Activated CD4-positive, alpha-beta T cell treated with anti-CD3 and anti-CD28 coated beads, Interleukin-2, amount 10 ng/mL, durations not matched to agents 24 days and 14 days (primary cell): ENCODE measurements at regions of chr2 and their contacts with region 1.

Region 1: GRCh38 chr2:85561317-85561979 is at the start of gene GGCX:
- DNase-seq: peak; percentile 97
- H3K4me3 Mint-ChIP-seq: peak within 1 kb of the TSS; percentile 97
- H3K27ac Mint-ChIP-seq: peak within 1 kb of the TSS; percentile 96
- H3K4me1 Mint-ChIP-seq: peaks cover 30% of the 10 kb centered on the region
- H3K27me3 Mint-ChIP-seq: no peaks in the 10 kb centered on the region
- total RNA-seq, gene GGCX: 21.8 and 23.1 TPM in 2 replicates

Region 2: DNA sequence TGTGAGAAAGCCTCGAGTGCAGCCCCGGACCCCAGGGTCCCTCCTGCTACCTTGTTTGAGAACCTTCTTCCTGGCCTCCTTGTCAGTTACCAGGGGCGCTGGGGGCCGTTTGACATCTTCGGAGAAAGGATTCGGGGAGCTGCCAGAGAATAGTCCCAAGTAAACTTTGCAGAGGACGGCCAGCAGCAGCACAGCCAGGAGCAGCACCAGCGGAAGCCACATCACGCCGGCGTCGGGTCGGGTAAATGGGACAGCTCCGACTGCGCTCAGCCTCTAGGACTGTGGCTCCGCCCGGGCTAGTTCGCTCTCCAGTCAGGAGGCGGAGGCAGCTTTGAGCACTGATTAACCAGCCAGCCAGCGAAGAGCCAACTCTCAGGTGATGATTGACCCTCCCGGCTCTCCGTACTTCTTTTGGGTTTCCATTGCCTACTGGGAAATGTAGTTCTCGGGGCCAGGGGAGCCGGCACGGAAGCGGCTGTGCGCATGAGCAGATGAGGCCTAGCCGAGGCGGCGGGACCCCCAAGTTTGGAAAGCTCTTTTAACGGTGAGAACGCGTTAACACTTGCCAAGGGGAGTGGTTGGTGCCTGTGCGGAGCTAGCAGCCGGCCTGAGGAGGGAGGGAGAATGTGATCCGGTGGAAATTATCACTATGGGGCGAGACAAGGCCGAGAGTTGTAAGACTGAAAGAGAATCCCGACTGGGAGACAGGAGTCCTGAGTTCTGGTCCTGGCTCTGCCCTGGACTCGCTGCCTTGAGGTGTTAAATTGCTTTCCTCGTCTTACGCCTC is 207.0 kb before region 1 on chr2 and contains the starts of genes ELMOD3 and RETSAT:
- intact Hi-C with region 1: loop called (anchors 1 kb)
- DNase-seq: peak; percentile 99
- H3K4me3 Mint-ChIP-seq: peak within 1 kb of the TSS; percentile 94
- H3K27ac Mint-ChIP-seq: peak within 1 kb of the TSS; percentile 94
- H3K4me1 Mint-ChIP-seq: peaks cover 26% of the 10 kb centered on the region
- H3K27me3 Mint-ChIP-seq: no peaks in the 10 kb centered on the region
- total RNA-seq, gene ELMOD3: 16.7 and 18.2 TPM in 2 replicates
- total RNA-seq, gene RETSAT: 21.0 and 25.0 TPM in 2 replicates

Region 3: DNA sequence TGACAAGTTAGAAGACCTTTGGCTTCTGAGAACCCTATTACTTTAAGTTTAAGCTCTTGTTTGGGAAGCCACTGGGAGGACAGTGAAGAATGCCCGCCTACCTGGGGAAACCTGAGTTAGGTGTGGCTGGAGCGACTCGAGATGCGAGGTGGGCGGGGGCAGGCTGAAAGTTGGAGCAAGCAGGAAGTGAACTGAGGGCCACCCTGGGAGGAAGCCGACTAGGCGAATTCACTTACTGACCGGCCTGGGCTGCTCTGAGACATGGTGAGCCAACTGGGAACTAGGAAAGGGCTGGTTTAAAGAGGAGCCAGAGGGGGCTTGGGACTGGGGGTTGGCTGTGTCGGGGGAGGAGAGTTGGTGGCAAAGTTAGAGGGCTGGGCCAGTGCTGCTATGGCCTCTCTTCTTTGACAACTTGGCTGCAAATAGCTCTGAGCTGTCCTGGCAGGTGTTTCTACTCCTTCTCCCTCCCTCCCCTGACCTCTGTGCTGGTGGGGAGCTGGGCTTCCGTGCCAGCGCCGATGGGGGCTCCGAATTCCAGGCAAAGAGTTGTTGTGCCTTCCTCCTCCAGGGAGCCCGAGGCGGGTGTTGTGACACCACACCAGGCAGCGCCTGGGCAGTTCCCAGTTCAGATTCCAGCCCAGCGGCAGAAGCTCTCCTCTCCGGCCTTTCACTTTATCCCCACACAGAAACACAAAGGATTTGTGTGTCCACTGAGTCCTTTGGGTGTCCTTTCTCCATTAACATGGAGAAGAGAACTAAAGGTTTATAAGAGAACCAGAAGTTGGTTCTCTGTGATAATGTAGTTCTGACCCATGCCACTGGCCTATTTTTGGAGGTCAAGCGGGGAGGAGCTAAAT is 16.2 kb after region 1 on chr2 and contains the start of gene VAMP8:
- intact Hi-C with region 1: loop called (anchors 1 kb)
- DNase-seq: peak; percentile 88
- H3K4me3 Mint-ChIP-seq: peak within 1 kb of the TSS; percentile 95
- H3K27ac Mint-ChIP-seq: peak within 1 kb of the TSS; percentile 81
- H3K4me1 Mint-ChIP-seq: peaks cover 30% of the 10 kb centered on the region
- H3K27me3 Mint-ChIP-seq: peaks cover 2% of the 10 kb centered on the region
- total RNA-seq, gene VAMP8: 90.9 and 91.3 TPM in 2 replicates

Region 4: GRCh38 chr2:85595301-85596025 is 34.0 kb after region 1 on chr2 and contains the start of gene RNF181:
- intact Hi-C with region 1: loop called (anchors 1 kb)
- DNase-seq: peak; percentile 98
- H3K4me3 Mint-ChIP-seq: peak within 1 kb of the TSS; percentile 94
- H3K27ac Mint-ChIP-seq: peak within 1 kb of the TSS; percentile 90
- H3K4me1 Mint-ChIP-seq: peaks cover 20% of the 10 kb centered on the region
- H3K27me3 Mint-ChIP-seq: no peaks in the 10 kb centered on the region
- total RNA-seq, gene RNF181: 111 and 116 TPM in 2 replicates

Region 5: GRCh38 chr2:85611705-85612587 is 50.5 kb after region 1 on chr2 and contains the start of gene C2orf68:
- intact Hi-C with region 1: loop called (anchors 2 kb)
- DNase-seq: peak; percentile 97
- H3K4me3 Mint-ChIP-seq: peak within 1 kb of the TSS; percentile 92
- H3K27ac Mint-ChIP-seq: peak within 1 kb of the TSS; percentile 91
- H3K4me1 Mint-ChIP-seq: peaks cover 13% of the 10 kb centered on the region
- H3K27me3 Mint-ChIP-seq: no peaks in the 10 kb centered on the region
- total RNA-seq, gene C2orf68: 36.6 and 36.9 TPM in 2 replicates

Region 6: GRCh38 chr2:85728883-85729824 is 167.7 kb after region 1 on chr2:
- intact Hi-C with region 1: no loop called
- DNase-seq: peak; percentile 93
- H3K4me3 Mint-ChIP-seq: no peak overlapping the region
- H3K27ac Mint-ChIP-seq: no peak overlapping the region
- H3K4me1 Mint-ChIP-seq: peaks cover 3% of the 10 kb centered on the region
- H3K27me3 Mint-ChIP-seq: peaks cover 32% of the 10 kb centered on the region